Activated T-helper 2 cell treated with anti-CD3 and anti-CD28 coated beads, Interferon-gamma antibody, Interleukin-2, Interleukin-4, amounts not matched to agents 10 μg/mL and 5 μg/mL and 100 μg/mL, durations not matched to agents 14 hours and 24 hours and 36 hours (primary cell): ENCODE measurements at regions of chr7 and their contacts with region 1.

Region 1: GRCh38 chr7:47882635-47883034 is 65.6 kb downstream of the PKD1L1 start:
- DNase-seq: no peak
- H3K4me3 Mint-ChIP-seq: no peak overlapping the region
- H3K27ac Mint-ChIP-seq: no peak overlapping the region
- H3K4me1 Mint-ChIP-seq: no peaks in the 10 kb centered on the region
- H3K27me3 Mint-ChIP-seq: peaks cover 6% of the 10 kb centered on the region

Region 2: GRCh38 chr7:47497367-47498096 is 385.1 kb before region 1 on chr7:
- intact Hi-C with region 1: no loop called
- DNase-seq: no peak
- H3K4me3 Mint-ChIP-seq: no peak overlapping the region
- H3K27ac Mint-ChIP-seq: no peak overlapping the region
- H3K4me1 Mint-ChIP-seq: peaks cover 5% of the 10 kb centered on the region
- H3K27me3 Mint-ChIP-seq: peaks cover 9% of the 10 kb centered on the region

Region 3: GRCh38 chr7:47866120-47866519 is 16.5 kb before region 1 on chr7:
- intact Hi-C with region 1: no loop called
- DNase-seq: no peak
- H3K4me3 Mint-ChIP-seq: no peak overlapping the region
- H3K27ac Mint-ChIP-seq: no peak overlapping the region
- H3K4me1 Mint-ChIP-seq: peaks cover 17% of the 10 kb centered on the region
- H3K27me3 Mint-ChIP-seq: no peaks in the 10 kb centered on the region

Region 4: DNA sequence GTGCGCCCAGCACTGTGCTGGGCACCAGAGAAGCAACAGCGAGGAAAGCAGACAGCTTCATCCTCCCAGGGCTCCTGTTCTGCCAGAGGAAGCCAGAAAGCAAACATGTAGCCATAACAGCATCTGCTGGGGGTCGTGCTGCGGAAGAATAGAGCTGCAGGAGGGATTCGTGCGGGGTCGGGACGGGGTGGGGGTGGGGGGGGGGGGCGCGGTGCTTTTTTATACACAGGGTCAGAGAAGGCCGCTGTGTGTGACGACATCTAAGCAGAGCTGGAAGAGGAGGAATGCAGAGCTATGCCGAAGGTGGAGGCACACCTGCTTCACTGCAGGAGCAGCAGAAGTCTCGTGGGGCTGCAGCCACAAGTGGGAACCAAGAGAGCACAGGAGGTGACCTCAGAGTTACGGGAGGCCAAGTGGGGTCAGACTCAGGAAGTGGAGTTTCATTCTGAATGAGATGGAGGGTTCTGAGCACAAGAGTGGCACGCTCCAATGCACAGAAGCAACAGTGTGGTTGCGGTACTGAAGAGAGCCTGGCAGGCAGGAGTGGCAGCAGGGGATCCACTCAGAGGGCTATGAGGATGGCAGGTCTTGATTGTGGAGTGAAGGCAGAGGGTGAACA is 54.5 kb after region 1 on chr7:
- intact Hi-C with region 1: loop called (anchors 5 kb)
- DNase-seq: no peak
- H3K4me3 Mint-ChIP-seq: peak overlapping the region; percentile 7
- H3K27ac Mint-ChIP-seq: peak overlapping the region; percentile 71
- H3K4me1 Mint-ChIP-seq: peaks cover 10% of the 10 kb centered on the region
- H3K27me3 Mint-ChIP-seq: no peaks in the 10 kb centered on the region

Region 5: DNA sequence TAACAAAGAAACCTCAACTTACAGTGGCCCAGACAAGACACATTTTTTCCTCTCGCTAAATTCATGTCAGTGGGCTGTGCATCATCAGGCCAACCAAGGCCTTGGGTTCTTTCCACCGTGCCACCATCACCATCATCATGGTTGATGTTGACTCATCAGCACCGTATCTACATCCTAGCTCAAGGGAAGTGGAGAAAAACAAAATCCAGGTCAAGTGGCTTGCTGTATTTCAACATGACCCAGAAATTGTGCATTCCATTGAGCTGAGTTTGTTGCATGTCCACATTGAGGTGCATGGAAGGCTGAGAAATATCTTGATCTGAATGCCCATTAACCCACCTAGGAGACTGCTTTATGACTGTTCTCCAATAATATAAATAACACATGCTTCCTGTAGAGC is 729.4 kb after region 1 on chr7:
- intact Hi-C with region 1: no loop called
- DNase-seq: no peak
- H3K4me3 Mint-ChIP-seq: no peak overlapping the region
- H3K27ac Mint-ChIP-seq: no peak overlapping the region
- H3K4me1 Mint-ChIP-seq: no peaks in the 10 kb centered on the region
- H3K27me3 Mint-ChIP-seq: no peaks in the 10 kb centered on the region